ENCODE measurements at regions of chr6 and their contacts with region 1.

Region 1: DNA sequence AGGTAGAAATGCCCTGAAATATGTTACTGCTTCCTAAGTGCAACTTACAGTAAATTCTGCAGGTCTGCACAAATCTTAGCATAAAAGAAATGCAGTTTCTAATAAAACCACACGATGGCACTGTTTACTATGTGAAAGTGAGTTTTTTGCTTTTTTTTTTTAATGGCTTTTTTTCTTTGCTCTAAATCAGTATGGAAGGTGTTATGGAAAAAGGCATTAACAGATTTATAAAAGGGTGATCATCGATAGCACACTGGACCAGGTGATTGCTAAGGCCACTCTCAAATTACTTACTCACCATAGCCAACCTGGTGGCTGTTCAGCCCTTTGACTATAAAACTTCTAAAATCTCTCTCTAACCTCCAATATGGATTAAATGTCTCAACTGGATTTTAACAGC is 45.8 kb downstream of the AHI1 start:
- DNase-seq: peak in 1 of 2 experiments; percentile 36
- H3K4me3 ChIP-seq: no peak overlapping the region
- H3K4me3 Mint-ChIP-seq: no peak overlapping the region
- H3K27ac Mint-ChIP-seq: no peak overlapping the region
- H3K4me1 ChIP-seq: no peaks in the 10 kb centered on the region
- H3K4me1 Mint-ChIP-seq: no peaks in the 10 kb centered on the region
- H3K27me3 ChIP-seq: no peaks in the 10 kb centered on the region
- H3K27me3 Mint-ChIP-seq: no peaks in the 10 kb centered on the region
- CTCF ChIP-seq: peak; percentile 40 to 59

Region 2: DNA sequence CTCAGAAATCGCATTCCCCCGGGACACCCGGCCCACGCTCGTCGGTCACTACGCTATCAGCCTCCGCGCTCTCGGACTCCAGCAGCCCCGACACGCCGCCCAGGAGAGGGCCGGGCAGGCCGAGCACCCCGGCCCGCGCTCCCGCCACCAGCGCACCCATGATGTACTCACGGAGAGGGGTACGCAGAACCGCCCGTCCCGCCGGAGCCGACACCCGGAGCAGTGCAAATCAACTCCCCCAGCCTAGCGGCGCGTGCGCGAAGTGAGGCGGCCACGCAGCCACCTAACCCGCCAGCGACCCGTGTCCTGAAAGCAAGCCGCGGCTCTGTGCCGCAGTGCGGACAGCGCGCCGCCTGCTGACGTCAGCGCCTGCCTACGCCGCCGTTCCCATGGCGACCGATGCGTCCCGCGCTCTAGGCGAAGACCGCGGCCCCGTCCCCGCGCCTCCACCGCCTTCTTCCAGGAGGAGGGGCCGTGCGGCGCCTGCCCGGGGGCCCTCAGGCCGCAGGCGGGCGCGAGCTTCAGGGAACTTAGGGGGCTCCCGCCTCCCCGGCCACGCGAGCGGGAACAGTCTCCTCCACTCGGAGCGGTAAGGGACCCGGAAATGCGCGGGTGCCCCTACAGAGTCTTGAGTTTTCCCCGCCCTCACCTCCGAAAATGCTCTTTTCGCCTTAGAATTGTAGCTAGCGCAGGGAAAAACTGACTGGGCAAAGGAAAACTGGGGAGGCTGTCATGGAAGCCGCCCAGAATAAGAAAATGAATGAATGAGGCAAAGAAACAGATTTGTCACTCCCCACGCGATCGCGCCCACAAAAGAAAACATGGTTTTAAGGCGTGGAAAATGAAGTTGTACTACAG is 45.9 kb after region 1 on chr6 and contains the start of gene AHI1:
- CTCF ChIA-PET with region 1: no interaction called
- POLR2A ChIA-PET with region 1: no interaction called
- intact Hi-C with region 1: loop called (anchors 2 kb)
- DNase-seq: peak; percentile 92 to 94
- H3K4me3 ChIP-seq: peak within 1 kb of the TSS; percentile 85
- H3K4me3 Mint-ChIP-seq: no peak within 1 kb of the TSS
- H3K27ac Mint-ChIP-seq: no peak within 1 kb of the TSS
- H3K4me1 ChIP-seq: 0 out of 2 replicates have a peak, but pooled peaks cover 14% of the 10 kb centered on the region
- H3K4me1 Mint-ChIP-seq: no peaks in the 10 kb centered on the region
- H3K27me3 ChIP-seq: no peaks in the 10 kb centered on the region
- H3K27me3 Mint-ChIP-seq: no peaks in the 10 kb centered on the region
- CTCF ChIP-seq: no peak
- total RNA-seq, gene AHI1: 10.4 and 11.3 TPM in 2 replicates

Region 3: DNA sequence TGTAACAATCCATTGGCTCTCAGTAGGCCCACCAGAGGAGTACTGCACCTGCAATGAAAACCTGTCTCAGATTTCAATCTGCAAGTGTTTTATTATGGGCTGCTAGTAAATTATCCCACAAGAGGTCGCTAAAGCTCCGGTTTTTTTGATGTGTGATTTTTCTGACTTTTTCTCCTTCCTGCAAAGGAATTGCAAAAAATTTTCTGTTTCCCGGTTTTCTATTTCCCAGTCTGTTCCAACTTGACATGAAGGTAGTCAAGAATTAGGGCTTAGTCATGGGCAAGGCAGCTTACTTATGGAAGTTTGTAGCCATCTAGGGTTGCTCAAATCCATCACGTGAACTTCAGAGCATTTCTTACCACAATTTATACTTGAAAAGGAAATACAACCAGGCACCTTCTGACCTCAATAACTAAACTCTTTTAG is 84.3 kb after region 1 on chr6:
- CTCF ChIA-PET with region 1: no interaction called
- POLR2A ChIA-PET with region 1: no interaction called
- intact Hi-C with region 1: loop called (anchors 10 kb)
- DNase-seq: peak in 1 of 2 experiments; percentile 22
- H3K4me3 ChIP-seq: no peak overlapping the region
- H3K4me3 Mint-ChIP-seq: no peak overlapping the region
- H3K27ac Mint-ChIP-seq: no peak overlapping the region
- H3K4me1 ChIP-seq: no peaks in the 10 kb centered on the region
- H3K4me1 Mint-ChIP-seq: no peaks in the 10 kb centered on the region
- H3K27me3 ChIP-seq: no peaks in the 10 kb centered on the region
- H3K27me3 Mint-ChIP-seq: peaks cover 6% of the 10 kb centered on the region
- CTCF ChIP-seq: peak; percentile 57 to 62

Region 4: DNA sequence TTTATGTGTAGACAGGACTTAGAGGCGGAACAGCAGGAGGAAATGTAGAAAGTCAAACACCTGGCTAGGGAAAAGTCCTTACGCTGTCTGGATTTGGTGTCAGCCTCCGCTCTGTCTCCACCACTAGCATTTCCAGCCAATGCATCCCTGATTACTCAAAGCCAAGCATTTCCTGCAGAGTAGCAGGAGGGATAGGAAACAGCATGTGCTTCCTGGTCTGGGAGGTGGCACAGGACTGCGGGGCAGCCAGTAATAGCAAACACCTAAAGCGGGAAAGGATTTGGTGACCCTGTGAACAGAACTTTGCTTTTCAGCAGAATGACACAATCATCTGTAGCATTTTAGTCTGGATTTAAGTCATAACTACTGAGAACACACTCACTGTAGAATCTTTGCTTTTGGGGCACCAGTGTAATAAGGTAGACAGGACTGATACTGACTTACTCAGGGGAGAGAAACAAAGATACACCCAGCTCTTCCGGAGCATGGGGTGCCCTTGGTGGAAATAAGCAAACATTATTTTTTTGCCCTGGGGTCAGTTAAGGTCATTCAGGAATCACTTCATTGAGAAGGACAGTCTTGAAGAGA is 179.2 kb after region 1 on chr6:
- CTCF ChIA-PET with region 1: no interaction called
- POLR2A ChIA-PET with region 1: no interaction called
- intact Hi-C with region 1: no loop called
- DNase-seq: peak in 1 of 2 experiments; percentile 1
- H3K4me3 ChIP-seq: no peak overlapping the region
- H3K4me3 Mint-ChIP-seq: no peak overlapping the region
- H3K27ac Mint-ChIP-seq: no peak overlapping the region
- H3K4me1 ChIP-seq: peaks cover 6% of the 10 kb centered on the region; the same call in 1 of the 2 replicates
- H3K4me1 Mint-ChIP-seq: no peaks in the 10 kb centered on the region
- H3K27me3 ChIP-seq: no peaks in the 10 kb centered on the region
- H3K27me3 Mint-ChIP-seq: peaks cover 14% of the 10 kb centered on the region
- CTCF ChIP-seq: no peak

Region 5: GRCh38 chr6:135667691-135668455 is 216.2 kb after region 1 on chr6:
- CTCF ChIA-PET with region 1: no interaction called
- POLR2A ChIA-PET with region 1: no interaction called
- intact Hi-C with region 1: loop called (anchors 5 kb)
- DNase-seq: no peak
- H3K4me3 ChIP-seq: no peak overlapping the region
- H3K4me3 Mint-ChIP-seq: no peak overlapping the region
- H3K27ac Mint-ChIP-seq: no peak overlapping the region
- H3K4me1 ChIP-seq: no peaks in the 10 kb centered on the region
- H3K4me1 Mint-ChIP-seq: no peaks in the 10 kb centered on the region
- H3K27me3 ChIP-seq: 0 out of 2 replicates have a peak, but pooled peaks cover 1% of the 10 kb centered on the region
- H3K27me3 Mint-ChIP-seq: peaks cover 12% of the 10 kb centered on the region
- CTCF ChIP-seq: no peak

Measured in Caco-2 (cell line).